ENCODE measurements at regions of chr1 and their contacts with region 1.

Region 1: DNA sequence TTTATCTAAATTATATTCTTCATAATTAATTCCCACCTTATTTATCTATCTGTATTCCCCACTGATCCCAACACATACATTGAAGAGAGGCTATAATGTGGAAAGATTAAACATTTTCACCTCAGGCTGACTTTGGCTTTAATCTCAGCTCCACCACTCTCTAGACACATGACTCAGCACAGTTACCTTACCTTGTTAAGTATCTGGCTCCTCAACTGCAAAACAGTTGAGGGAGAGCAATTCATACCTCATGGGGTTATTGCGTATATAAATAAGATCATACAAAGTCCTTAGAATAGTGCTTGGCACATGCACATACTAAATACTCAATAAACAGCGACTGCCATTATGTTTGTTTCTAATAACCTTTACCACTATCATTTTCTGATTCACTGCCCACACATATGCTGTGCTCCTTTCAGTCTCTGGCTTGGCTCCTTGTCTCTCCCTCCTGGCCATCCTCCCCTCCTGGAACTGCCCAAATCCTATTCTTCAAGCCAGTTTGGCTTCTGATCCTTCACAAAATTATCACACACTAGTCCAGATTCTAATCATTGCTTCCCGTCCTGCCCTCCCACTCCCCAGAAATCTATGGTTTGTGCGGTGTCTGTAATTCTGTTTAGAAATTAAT is 50.1 kb downstream of the BCL9 start:
- DNase-seq: no peak
- H3K4me3 ChIP-seq: no peak overlapping the region
- H3K27ac ChIP-seq: peak overlapping the region in 3 of 5 donors; percentile 31 to 54 (median 44)
- H3K4me1 ChIP-seq: peaks cover 14 to 16% of the 10 kb centered on the region in 2 donors
- H3K27me3 ChIP-seq: no peaks in the 10 kb centered on the region
- CTCF ChIP-seq: no peak
- POLR2A ChIP-seq: no peak

Region 2: GRCh38 chr1:147515046-147515869 is 76.1 kb before region 1 on chr1:
- intact Hi-C with region 1: no loop called
- DNase-seq: peak in 1 of 7 donors; percentile 25
- H3K4me3 ChIP-seq: no peak overlapping the region
- H3K27ac ChIP-seq: no peak overlapping the region
- H3K4me1 ChIP-seq: peaks cover 12 to 19% of the 10 kb centered on the region in 2 donors
- H3K27me3 ChIP-seq: no peaks in the 10 kb centered on the region
- CTCF ChIP-seq: peak in 3 of 6 experiments; percentile 12 to 45 (median 28)
- POLR2A ChIP-seq: no peak

Region 3: GRCh38 chr1:147541672-147542568 is 49.5 kb before region 1 on chr1:
- intact Hi-C with region 1: loop called in 1 of 2 experiments (anchors 5 kb)
- DNase-seq: peak; percentile 47 to 74 (median 66)
- H3K4me3 ChIP-seq: peak overlapping the region; percentile 67 to 93 (median 88)
- H3K27ac ChIP-seq: peak overlapping the region; percentile 85 to 94 (median 91)
- H3K4me1 ChIP-seq: peaks cover 47 to 61% of the 10 kb centered on the region in 2 donors
- H3K27me3 ChIP-seq: no peaks in the 10 kb centered on the region
- CTCF ChIP-seq: no peak
- POLR2A ChIP-seq: peak in 1 of 2 donors; percentile 37

Measured in adrenal gland (tissue), 19 donors.